ENCODE measurements at regions of chr1 and their contacts with region 1.

Region 1: GRCh38 chr1:181166377-181167196 is 78.1 kb downstream of the IER5 start:
- DNase-seq: peak; percentile 79
- H3K4me3 ChIP-seq: no peak overlapping the region
- H3K27ac ChIP-seq: no peak overlapping the region
- H3K4me1 ChIP-seq: no peaks in the 10 kb centered on the region
- H3K27me3 ChIP-seq: no peaks in the 10 kb centered on the region
- CTCF ChIP-seq: peak; percentile 88

Region 2: GRCh38 chr1:180515864-180516388 is 650.7 kb before region 1 on chr1:
- intact Hi-C with region 1: loop called (anchors 5 kb)
- DNase-seq: peak; percentile 72
- H3K4me3 ChIP-seq: no peak overlapping the region
- H3K27ac ChIP-seq: no peak overlapping the region
- H3K4me1 ChIP-seq: no peaks in the 10 kb centered on the region
- H3K27me3 ChIP-seq: no peaks in the 10 kb centered on the region
- CTCF ChIP-seq: peak; percentile 78

Region 3: GRCh38 chr1:180881806-180882509 is 284.6 kb before region 1 on chr1:
- intact Hi-C with region 1: loop called (anchors 5 kb)
- DNase-seq: no peak
- H3K4me3 ChIP-seq: no peak overlapping the region
- H3K27ac ChIP-seq: no peak overlapping the region
- H3K4me1 ChIP-seq: no peaks in the 10 kb centered on the region
- H3K27me3 ChIP-seq: no peaks in the 10 kb centered on the region
- CTCF ChIP-seq: peak; percentile 26

Region 4: GRCh38 chr1:181038399-181038873 is 128.2 kb before region 1 on chr1:
- intact Hi-C with region 1: loop called (anchors 5 kb)
- DNase-seq: peak; percentile 72
- H3K4me3 ChIP-seq: no peak overlapping the region
- H3K27ac ChIP-seq: no peak overlapping the region
- H3K4me1 ChIP-seq: no peaks in the 10 kb centered on the region
- H3K27me3 ChIP-seq: no peaks in the 10 kb centered on the region
- CTCF ChIP-seq: peak; percentile 61

Region 5: DNA sequence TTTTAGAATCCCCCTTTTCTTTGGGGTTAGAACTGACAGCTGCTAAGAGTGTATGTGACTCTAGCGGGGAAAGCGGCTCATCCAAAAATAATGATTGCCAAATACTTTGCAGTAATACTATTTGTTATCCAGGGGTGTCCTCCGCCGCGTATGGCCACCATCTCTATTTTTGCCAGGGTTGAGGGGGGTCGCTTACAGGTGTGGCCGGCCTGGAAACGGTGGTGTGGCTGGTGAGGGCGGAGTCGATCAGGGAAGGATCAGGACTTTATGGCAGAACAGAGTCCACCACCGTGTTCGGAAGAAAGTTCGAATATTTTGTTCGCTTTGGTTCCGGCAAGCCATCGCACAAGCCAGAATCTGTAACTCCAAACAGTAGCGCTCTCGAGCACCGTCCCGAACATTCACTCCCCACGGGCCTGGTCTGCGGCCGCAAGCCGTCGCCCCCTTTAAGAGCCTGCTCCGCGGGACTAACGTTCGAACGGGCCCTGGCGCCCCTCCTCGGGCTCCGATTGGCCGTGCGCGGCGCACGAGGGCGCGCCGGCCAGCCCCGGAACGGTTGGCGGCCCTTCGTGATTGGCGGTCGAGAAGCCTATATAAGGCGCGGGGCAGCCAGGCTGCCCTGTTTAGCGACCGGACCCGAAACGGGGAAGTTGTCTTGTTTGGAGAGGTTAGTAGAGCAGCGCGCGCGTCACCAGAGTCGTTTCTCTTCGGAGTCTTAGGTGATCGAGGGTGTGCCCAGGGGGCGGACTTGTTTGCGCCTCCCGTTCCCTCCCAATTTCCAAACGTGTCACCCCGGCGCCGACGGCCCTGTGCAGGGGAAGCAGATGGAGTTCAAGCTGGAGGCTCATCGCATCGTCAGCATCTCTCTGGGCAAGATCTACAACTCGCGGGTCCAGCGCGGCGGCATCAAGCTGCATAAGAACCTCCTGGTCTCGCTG is 78.2 kb before region 1 on chr1 and contains the start of gene IER5:
- intact Hi-C with region 1: loop called (anchors 5 kb)
- DNase-seq: peak; percentile 99
- H3K4me3 ChIP-seq: peak within 1 kb of the TSS; percentile 60
- H3K27ac ChIP-seq: peak within 1 kb of the TSS; percentile 96
- H3K4me1 ChIP-seq: peaks cover 4% of the 10 kb centered on the region
- H3K27me3 ChIP-seq: no peaks in the 10 kb centered on the region
- CTCF ChIP-seq: no peak
- total RNA-seq, gene IER5: 19.6 to 20.1 TPM

Region 6: DNA sequence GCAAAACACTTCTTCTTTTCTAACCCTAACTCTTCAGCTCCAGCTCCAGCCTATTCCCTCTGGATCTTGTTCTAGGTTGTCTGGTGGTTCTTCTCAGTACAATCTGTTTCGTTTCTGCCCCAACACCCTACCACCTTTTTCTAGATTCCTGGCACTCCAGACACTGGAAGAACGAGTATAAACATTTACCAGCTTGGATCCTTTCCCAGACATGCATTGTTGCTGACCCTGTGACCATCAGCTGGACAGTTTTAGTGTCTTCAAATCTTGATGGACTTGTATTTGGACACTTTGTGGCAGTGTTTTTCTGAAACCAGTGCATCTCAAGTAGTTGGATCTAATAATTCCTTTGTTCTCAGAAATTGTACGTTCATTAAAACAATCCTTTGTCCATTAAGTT is 286.2 kb after region 1 on chr1:
- intact Hi-C with region 1: no loop called
- DNase-seq: no peak
- H3K4me3 ChIP-seq: no peak overlapping the region
- H3K27ac ChIP-seq: no peak overlapping the region
- H3K4me1 ChIP-seq: no peaks in the 10 kb centered on the region
- H3K27me3 ChIP-seq: no peaks in the 10 kb centered on the region
- CTCF ChIP-seq: no peak

Measured in colonic mucosa (tissue), 4 donors.